Colonic mucosa (tissue), 4 donors: ENCODE measurements at regions of chr9 and their contacts with region 1.

Region 1: GRCh38 chr9:110183208-110184145 is 24.5 kb downstream of the C9orf152 start:
- DNase-seq: peak; percentile 87
- H3K4me3 ChIP-seq: no peak overlapping the region
- H3K27ac ChIP-seq: no peak overlapping the region
- H3K4me1 ChIP-seq: no peaks in the 10 kb centered on the region
- H3K27me3 ChIP-seq: no peaks in the 10 kb centered on the region
- CTCF ChIP-seq: peak; percentile 72

Region 2: DNA sequence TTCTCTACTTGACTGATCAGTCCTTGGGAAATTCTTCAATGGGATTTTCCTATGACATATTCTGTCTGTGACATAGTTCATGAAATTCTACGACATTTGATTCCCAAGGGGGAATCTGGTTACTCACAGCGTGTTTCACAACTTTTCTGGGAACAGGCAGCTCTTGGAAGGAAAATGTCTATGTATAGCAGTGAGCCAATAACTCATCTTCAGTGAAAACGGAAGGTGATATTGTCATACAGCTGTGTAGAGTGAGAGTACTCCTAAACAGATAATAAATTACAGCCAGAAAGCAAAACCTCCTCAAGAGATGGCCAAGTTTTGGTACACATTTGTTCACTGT is 67.0 kb before region 1 on chr9:
- intact Hi-C with region 1: no loop called
- DNase-seq: no peak
- H3K4me3 ChIP-seq: no peak overlapping the region
- H3K27ac ChIP-seq: no peak overlapping the region
- H3K4me1 ChIP-seq: no peaks in the 10 kb centered on the region
- H3K27me3 ChIP-seq: no peaks in the 10 kb centered on the region
- CTCF ChIP-seq: no peak

Region 3: GRCh38 chr9:110148384-110148783 is 35.1 kb before region 1 on chr9:
- intact Hi-C with region 1: no loop called
- DNase-seq: no peak
- H3K4me3 ChIP-seq: no peak overlapping the region
- H3K27ac ChIP-seq: peak overlapping the region; percentile 35
- H3K4me1 ChIP-seq: no peaks in the 10 kb centered on the region
- H3K27me3 ChIP-seq: no peaks in the 10 kb centered on the region
- CTCF ChIP-seq: no peak

Region 4: GRCh38 chr9:110217656-110218099 is 34.2 kb after region 1 on chr9:
- intact Hi-C with region 1: loop called (anchors 2 kb)
- DNase-seq: no peak
- H3K4me3 ChIP-seq: no peak overlapping the region
- H3K27ac ChIP-seq: no peak overlapping the region
- H3K4me1 ChIP-seq: peaks cover 12% of the 10 kb centered on the region
- H3K27me3 ChIP-seq: no peaks in the 10 kb centered on the region
- CTCF ChIP-seq: peak; percentile 77

Region 5: DNA sequence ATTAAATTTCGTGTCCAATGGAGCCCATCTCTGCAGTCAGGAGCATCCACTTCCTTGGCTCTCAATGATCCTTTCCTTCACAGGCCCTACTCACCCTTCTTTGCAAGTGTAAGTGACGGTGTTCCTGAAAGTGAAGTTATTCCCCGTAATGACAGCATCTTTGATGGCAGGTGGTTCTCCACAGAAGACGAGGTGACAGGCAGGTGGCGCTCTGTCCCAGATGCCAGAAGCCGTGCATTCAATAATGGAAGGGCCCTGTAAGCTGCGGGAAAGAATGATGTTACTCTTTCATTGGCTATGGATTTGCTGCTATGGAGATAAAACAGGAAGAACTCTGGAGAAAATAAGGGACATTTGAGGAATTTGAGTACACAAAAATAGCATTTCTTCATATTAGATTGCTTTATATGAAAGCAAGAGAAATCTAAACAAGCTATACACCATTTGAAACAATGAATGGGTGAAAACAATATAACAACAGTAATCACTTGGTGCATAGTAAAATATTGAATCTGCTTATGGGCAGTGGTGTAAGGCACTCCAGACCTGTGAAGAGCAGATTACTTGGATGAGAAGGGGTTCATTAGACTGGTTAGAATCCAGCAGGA is 244.1 kb after region 1 on chr9:
- intact Hi-C with region 1: loop called (anchors 5 kb)
- DNase-seq: peak; percentile 65
- H3K4me3 ChIP-seq: no peak overlapping the region
- H3K27ac ChIP-seq: no peak overlapping the region
- H3K4me1 ChIP-seq: no peaks in the 10 kb centered on the region
- H3K27me3 ChIP-seq: no peaks in the 10 kb centered on the region
- CTCF ChIP-seq: peak; percentile 54

Region 6: DNA sequence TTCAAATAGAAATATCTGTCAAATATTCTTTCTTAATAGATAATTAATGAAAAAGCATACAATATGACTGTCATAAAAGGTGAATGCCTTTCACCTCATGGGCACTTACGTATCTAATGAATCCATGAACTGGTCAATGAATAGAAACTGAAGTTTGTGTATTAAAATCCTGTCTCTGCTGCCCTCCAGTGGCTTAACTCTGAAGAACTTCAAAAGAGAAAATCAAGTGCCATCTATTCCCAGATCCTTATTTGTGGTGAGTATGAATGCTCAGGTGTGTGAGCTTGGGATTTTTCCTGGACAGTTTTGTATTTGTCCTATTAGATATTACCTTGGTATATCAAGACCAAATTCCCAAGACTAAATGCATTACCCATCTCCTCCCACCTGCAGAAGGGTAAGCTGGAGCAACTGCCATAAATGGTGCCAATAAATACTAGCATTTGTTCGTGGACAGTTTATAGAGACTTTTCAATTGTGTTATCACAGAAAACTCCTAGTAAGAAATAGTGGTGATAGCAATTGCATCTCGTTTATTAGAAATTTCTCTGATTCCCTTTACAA is 440.1 kb after region 1 on chr9:
- intact Hi-C with region 1: loop called (anchors 5 kb)
- DNase-seq: peak; percentile 56
- H3K4me3 ChIP-seq: no peak overlapping the region
- H3K27ac ChIP-seq: no peak overlapping the region
- H3K4me1 ChIP-seq: no peaks in the 10 kb centered on the region
- H3K27me3 ChIP-seq: no peaks in the 10 kb centered on the region
- CTCF ChIP-seq: peak; percentile 45